WTC11 (cell line): ENCODE measurements at regions of chr3 and their contacts with region 1.

Region 1: DNA sequence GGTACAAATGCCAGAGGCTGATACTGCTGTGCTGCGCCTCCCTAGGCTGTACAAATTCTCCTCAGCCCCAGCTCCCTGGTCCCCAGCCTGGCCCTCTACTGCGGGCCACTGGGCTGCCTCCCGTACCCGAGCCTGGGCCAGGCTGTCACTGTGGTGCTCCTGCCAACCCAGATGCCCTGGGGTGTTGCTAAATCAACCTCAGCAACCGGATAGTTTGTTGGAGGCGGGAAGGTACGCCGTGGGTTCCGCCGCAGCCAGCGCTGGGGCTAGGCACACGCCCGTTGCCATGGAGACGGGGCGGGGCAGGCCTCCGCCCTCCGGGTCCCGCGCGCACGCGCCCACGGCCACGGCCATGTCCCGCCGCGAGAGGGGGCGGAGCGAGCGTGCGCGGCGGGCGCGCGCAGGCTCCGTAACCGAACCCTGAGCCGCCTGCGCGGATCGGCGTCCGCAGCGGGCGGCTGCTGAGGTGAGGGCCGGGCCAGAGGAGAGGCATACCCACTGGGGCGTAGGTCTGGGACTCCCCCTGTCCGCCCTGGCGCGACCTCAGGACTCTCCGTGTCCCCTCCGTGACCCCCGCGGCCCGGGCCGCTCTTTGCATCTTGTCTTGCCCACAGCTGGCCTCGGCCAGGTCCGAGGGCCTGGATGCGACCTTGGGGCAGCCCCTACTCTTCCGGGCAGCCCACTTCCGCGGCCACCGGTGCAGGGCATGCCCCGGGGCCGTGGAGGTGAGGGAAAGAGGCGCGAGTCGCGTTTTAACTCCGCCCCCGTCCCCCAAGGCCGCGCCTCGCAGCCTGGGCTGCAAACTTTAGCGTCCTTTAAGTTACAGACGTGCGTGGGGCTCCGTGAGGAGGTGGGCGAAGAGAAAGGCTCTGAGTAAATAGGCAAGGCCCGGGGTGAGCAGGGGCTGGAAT is at the start of gene TEX264:
- DNase-seq: peak; percentile 58
- ATAC-seq: peak; percentile 28
- H3K4me3 Mint-ChIP-seq: peak within 1 kb of the TSS; percentile 75
- H3K27ac Mint-ChIP-seq: peak within 1 kb of the TSS; percentile 46
- H3K4me1 Mint-ChIP-seq: peaks cover 35% of the 10 kb centered on the region
- H3K27me3 Mint-ChIP-seq: no peaks in the 10 kb centered on the region; the same call in 1 of the 2 replicates
- CTCF ChIP-seq: no peak
- total RNA-seq, gene TEX264: 11.8 to 17.5 TPM (median 17.5 TPM) in 3 replicates

Region 2: DNA sequence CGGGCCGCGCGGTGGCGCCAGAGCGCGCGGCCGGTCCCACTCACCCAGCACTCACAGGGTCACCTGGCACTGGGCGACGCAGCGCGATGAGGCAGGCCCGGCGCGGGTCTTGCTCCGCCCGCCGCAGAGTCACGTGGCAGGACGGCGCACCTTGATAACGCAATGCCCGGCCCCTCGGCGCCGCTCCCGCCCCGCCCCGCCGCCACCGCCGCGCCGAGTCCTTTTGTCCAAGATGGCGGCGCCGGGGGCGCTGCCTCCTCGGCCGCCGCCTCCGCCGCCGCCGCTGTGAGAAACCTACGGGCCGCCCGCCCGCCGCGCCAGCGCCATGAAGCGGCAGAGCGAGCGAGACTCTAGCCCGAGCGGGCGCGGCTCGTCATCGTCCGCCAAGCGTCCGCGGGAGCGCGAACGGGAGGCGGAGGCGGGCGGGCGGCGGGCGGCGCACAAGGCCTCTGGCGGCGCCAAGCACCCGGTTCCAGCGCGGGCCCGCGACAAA is 280.0 kb before region 1 on chr3 and contains the start of gene RBM15B:
- CTCF ChIA-PET with region 1: interaction called, 11 read pairs
- POLR2A ChIA-PET with region 1: no interaction called
- DNase-seq: peak; percentile 98
- ATAC-seq: peak; percentile 86
- H3K4me3 Mint-ChIP-seq: peak within 1 kb of the TSS; percentile 76
- H3K27ac Mint-ChIP-seq: peak within 1 kb of the TSS; percentile 86
- H3K4me1 Mint-ChIP-seq: peaks cover 54% of the 10 kb centered on the region
- H3K27me3 Mint-ChIP-seq: no peaks in the 10 kb centered on the region
- CTCF ChIP-seq: no peak; the same call in 1 of the 2 replicates
- total RNA-seq, gene RBM15B: 53.9 to 55.6 TPM (median 55.4 TPM) in 3 replicates

Region 3: DNA sequence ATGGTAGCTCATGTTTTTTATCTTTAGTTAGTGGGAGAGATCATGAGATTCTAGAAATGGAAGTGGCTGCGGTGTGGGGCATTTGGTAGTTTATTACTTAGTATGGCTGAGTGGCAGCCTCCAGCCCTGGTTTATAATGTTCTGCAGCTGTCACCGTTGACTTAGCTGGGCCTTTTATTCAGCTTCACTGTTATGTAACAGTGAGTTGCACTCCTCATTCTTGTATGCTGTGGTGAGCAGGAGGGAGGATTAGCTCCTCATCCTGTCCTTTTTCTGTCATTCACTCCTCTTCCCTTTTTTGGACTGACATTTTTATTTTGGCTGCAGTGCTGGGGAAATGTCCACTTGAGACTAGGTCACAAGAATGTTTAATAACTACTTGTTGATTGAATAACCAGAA is 103.0 kb before region 1 on chr3:
- CTCF ChIA-PET with region 1: no interaction called
- POLR2A ChIA-PET with region 1: no interaction called
- DNase-seq: no peak
- ATAC-seq: no peak
- H3K4me3 Mint-ChIP-seq: no peak overlapping the region
- H3K27ac Mint-ChIP-seq: no peak overlapping the region
- H3K4me1 Mint-ChIP-seq: peaks cover 19% of the 10 kb centered on the region
- H3K27me3 Mint-ChIP-seq: no peaks in the 10 kb centered on the region
- CTCF ChIP-seq: no peak

Region 4: DNA sequence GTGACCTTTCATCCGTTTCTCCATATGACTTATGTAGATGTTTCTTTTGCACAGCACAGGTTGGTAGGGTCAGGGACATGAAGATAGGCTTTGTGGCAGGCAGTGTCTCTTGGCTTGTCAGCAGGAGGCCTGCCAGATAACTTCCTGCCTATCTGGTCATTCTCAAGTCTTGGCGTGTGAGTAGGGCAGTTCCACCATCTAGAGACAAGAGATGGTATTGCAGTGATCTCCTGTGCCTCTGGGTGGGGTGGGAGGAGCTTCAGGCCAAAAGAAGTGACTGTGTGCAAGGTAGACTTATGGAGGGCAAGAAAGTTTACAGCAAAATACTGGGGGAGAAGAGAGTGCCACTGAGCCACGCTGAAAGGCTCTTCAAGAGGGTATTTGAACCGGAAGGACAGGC is 11.0 kb after region 1 on chr3:
- CTCF ChIA-PET with region 1: interaction called, 65 read pairs
- POLR2A ChIA-PET with region 1: interaction called, 6 read pairs
- DNase-seq: peak; percentile 72
- ATAC-seq: peak; percentile 91
- H3K4me3 Mint-ChIP-seq: no peak overlapping the region
- H3K27ac Mint-ChIP-seq: peak overlapping the region; percentile 72; the same call in 1 of the 2 replicates
- H3K4me1 Mint-ChIP-seq: peaks cover 18% of the 10 kb centered on the region
- H3K27me3 Mint-ChIP-seq: no peaks in the 10 kb centered on the region
- CTCF ChIP-seq: peak; percentile 70

Region 5: DNA sequence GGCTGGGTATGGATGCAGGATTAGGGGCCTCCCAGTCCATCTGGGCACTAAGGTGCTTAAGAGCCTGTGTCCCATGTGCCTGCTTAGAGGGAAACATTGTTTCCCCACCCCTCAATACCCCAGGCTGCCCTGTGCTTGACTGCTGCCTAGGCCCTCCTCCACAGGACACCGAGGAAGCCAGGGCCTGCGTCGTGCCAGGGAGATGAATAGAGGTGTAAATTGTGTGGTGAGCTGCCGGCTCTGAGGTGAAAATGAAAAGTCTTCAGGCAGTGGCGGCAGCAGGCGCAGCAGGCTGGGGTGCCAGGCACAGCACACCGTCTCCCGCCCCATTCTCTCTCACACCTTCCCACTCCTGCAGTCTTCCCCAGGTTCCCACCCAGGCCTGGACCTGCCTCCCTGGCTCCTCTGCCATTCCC is 21.9 kb after region 1 on chr3:
- CTCF ChIA-PET with region 1: interaction called, 17 read pairs
- POLR2A ChIA-PET with region 1: no interaction called
- DNase-seq: no peak
- ATAC-seq: no peak
- H3K4me3 Mint-ChIP-seq: no peak overlapping the region
- H3K27ac Mint-ChIP-seq: no peak overlapping the region
- H3K4me1 Mint-ChIP-seq: peaks cover 6% of the 10 kb centered on the region
- H3K27me3 Mint-ChIP-seq: no peaks in the 10 kb centered on the region
- CTCF ChIP-seq: no peak

Region 6: GRCh38 chr3:51706788-51707731 is 36.0 kb after region 1 on chr3 and contains the start of gene GRM2:
- CTCF ChIA-PET with region 1: interaction called, 13 read pairs
- POLR2A ChIA-PET with region 1: no interaction called
- DNase-seq: peak; percentile 93
- ATAC-seq: peak; percentile 76
- H3K4me3 Mint-ChIP-seq: peak within 1 kb of the TSS; percentile 92
- H3K27ac Mint-ChIP-seq: no peak within 1 kb of the TSS
- H3K4me1 Mint-ChIP-seq: peaks cover 29% of the 10 kb centered on the region
- H3K27me3 Mint-ChIP-seq: peaks cover 28% of the 10 kb centered on the region
- CTCF ChIP-seq: no peak
- total RNA-seq, gene GRM2: 2.8 to 4.1 TPM (median 3.7 TPM) in 3 replicates

Region 7: DNA sequence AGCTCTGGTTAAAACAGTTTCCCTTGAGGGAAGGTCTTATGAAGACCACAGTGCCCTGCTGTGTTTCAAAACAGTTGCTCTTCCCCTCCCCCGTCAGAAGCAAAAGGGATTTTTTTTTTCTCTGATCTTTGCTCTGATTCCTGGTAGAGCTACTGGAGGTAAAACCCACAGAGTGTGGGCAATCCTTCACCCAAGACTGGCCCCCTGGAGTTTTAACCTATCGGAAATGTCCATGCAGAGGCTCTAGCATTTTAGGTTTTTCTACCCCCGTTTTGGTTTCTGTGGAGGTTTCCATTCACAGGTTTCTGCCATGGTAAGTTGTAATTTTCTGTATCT is 63.5 kb after region 1 on chr3:
- CTCF ChIA-PET with region 1: no interaction called
- POLR2A ChIA-PET with region 1: no interaction called
- DNase-seq: no peak
- ATAC-seq: peak; percentile 38
- H3K4me3 Mint-ChIP-seq: no peak overlapping the region
- H3K27ac Mint-ChIP-seq: no peak overlapping the region
- H3K4me1 Mint-ChIP-seq: peaks cover 25% of the 10 kb centered on the region
- H3K27me3 Mint-ChIP-seq: peaks cover 8% of the 10 kb centered on the region
- CTCF ChIP-seq: no peak